Prostate gland (tissue), 2 donors: ENCODE measurements at regions of chr19 and their contacts with region 1.

Region 1: DNA sequence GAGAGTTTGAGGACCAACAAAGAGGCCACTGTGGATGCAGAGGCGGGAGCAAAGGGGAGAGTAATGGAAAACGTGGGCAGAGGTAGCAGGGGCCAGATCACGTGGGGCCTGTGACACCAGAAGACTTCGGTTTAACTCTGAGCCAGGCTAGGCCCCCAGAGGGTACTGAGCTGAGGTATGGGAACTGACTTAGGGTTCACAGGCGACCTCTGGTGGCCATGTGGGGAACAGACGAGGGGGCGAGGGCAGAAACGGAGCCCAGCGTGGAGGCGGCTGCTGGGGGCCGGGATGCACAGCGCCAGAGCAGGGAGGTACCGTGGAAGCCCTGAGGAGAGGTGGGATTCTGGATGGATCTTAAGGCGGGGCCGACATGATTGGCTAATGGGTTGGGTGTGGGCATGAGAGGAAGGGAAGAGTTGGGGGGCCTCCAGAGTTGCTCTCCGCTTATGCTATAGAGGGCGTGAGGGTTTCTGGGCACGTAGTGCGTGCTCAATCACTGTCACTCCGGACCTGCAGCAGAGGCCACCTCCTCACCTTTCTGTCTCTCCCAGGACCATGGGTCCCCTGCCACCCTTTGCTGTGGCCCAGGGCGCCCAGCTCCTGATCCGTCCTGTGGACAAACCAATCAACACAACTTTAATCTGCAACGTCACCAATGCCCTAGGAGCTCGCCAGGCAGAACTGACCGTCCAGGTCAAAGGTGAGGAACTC is 13.7 kb downstream of the PVR start:
- DNase-seq: peak; percentile 17
- H3K4me3 ChIP-seq: no peak overlapping the region
- H3K27ac ChIP-seq: no peak overlapping the region
- H3K4me1 ChIP-seq: no peaks in the 10 kb centered on the region
- H3K27me3 ChIP-seq: no peaks in the 10 kb centered on the region
- CTCF ChIP-seq: peak; percentile 53 to 86 (median 72)
- POLR2A ChIP-seq: no peak

Region 2: DNA sequence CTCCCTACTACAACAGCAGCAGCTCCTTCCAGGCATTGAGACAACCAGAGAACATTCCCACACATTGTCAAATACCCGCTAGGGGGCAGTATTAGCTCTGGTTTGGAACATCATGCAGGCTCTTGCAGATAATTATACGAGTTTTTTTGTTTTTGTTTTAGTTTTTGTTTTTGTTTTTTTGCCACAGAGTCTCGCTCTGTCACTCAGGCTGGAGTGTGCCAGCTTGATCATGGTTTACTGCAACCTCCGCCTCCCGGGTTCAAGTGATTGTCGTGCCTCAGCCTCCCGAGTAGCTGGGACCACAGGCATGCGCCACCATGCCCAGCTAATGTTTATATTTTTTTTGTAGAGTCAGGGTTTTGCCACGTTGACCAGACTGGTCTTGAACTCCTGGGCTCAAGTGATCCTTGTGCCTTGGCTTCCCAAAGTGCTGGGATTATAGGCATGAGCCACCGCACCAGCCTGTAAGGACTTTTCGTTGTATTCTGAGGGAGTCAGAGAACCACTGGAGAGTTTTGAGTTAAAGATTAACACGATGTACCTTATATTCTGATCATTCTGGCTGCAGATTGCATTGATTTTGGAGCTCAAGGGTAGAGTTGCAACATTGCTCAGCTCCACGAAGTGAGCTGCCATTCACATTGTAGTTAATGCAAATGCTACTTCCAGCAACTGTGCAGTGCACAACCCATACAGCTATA is 86.2 kb before region 1 on chr19:
- intact Hi-C with region 1: loop called (anchors 2 kb)
- DNase-seq: peak; percentile 48
- H3K4me3 ChIP-seq: no peak overlapping the region
- H3K27ac ChIP-seq: no peak overlapping the region
- H3K4me1 ChIP-seq: no peaks in the 10 kb centered on the region
- H3K27me3 ChIP-seq: no peaks in the 10 kb centered on the region
- CTCF ChIP-seq: peak in 3 of 4 experiments; percentile 50 to 64 (median 50)
- POLR2A ChIP-seq: no peak